ENCODE measurements at regions of chr2 and their contacts with region 1.

Region 1: GRCh38 chr2:158487419-158487818 is 30.7 kb downstream of the PKP4 start:
- DNase-seq: peak; percentile 34
- H3K4me3 Mint-ChIP-seq: no peak overlapping the region
- H3K27ac Mint-ChIP-seq: peak overlapping the region; percentile 2
- H3K4me1 Mint-ChIP-seq: peaks cover 47% of the 10 kb centered on the region
- H3K27me3 Mint-ChIP-seq: no peaks in the 10 kb centered on the region
- CTCF ChIP-seq: no peak

Region 2: GRCh38 chr2:158473719-158474392 is 13.6 kb before region 1 on chr2:
- CTCF ChIA-PET with region 1: interaction called, 4 read pairs
- POLR2A ChIA-PET with region 1: interaction called, 10 read pairs
- intact Hi-C with region 1: no loop called
- DNase-seq: no peak
- H3K4me3 Mint-ChIP-seq: no peak overlapping the region
- H3K27ac Mint-ChIP-seq: no peak overlapping the region
- H3K4me1 Mint-ChIP-seq: no peaks in the 10 kb centered on the region
- H3K27me3 Mint-ChIP-seq: no peaks in the 10 kb centered on the region
- CTCF ChIP-seq: no peak

Region 3: DNA sequence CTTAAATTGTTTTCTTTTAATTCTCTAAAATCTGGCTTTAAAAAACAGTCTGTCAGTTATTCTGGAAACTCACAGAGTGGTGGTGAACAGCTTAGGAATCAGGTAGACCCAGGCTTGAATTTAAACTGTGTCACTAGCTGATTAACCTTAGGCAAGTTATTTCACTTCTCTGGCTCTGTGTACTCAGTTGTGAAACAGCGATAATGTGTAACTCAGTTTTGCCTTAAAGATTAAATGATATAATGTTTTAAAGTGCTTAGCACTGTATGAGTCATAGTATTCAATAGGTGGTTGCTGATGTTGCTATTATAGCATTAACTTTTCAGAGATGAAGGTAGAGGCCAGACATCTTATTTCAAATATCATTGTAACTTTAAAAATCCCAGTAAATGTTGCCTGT is 10.1 kb after region 1 on chr2:
- CTCF ChIA-PET with region 1: interaction called, 4 read pairs
- POLR2A ChIA-PET with region 1: interaction called, 24 read pairs
- intact Hi-C with region 1: no loop called
- DNase-seq: peak; percentile 62
- H3K4me3 Mint-ChIP-seq: no peak overlapping the region
- H3K27ac Mint-ChIP-seq: peak overlapping the region; percentile 5
- H3K4me1 Mint-ChIP-seq: peaks cover 28% of the 10 kb centered on the region
- H3K27me3 Mint-ChIP-seq: no peaks in the 10 kb centered on the region
- CTCF ChIP-seq: no peak

Measured in MCF 10A (cell line).